ENCODE measurements at regions of chr7 and their contacts with region 1.

Region 1: GRCh38 chr7:2232766-2233520 is at the start of gene MAD1L1:
- DNase-seq: peak; percentile 93
- H3K4me3 Mint-ChIP-seq: peak within 1 kb of the TSS; percentile 88
- H3K27ac Mint-ChIP-seq: peak within 1 kb of the TSS; percentile 46
- H3K4me1 Mint-ChIP-seq: peaks cover 32% of the 10 kb centered on the region
- H3K27me3 Mint-ChIP-seq: no peaks in the 10 kb centered on the region
- total RNA-seq, gene MAD1L1: 37.5 to 40.2 TPM

Region 2: DNA sequence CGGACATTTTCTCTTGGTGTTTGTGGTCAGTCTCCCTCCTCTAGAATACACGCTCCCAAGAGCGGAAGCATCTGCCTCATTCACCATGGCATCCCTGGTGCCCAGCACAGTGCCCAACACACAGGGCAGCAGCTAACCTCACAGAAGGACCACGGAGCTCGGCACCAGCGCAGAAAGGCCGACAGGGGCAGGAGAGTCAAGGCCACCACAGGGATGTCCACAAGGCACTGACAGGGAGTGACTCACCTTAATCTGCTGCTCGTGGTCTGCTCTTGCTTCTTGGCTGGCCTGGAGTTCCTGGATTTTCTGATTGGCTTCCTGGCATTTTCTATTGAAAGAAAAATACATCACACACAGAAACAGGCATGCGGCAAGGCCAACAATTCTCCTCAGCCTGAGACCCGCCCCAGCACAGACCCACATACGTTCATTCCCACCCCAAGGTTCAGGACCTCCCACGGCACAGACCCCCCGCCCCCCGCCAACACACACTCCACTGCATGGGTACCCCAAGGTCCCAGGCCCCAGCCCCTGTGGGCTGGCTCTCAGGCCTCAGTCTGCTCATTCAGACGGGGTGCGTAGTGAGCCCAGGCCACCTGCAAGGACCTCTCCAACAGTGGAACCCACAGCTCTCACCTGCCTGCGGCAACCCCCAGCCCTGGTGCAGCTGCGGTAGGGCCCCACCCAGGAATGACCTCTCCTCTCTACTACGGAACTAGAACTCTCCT is 15.1 kb before region 1 on chr7:
- CTCF ChIA-PET with region 1: no interaction called
- intact Hi-C with region 1: no loop called
- DNase-seq: no peak
- H3K4me3 Mint-ChIP-seq: no peak overlapping the region
- H3K27ac Mint-ChIP-seq: no peak overlapping the region
- H3K4me1 Mint-ChIP-seq: no peaks in the 10 kb centered on the region
- H3K27me3 Mint-ChIP-seq: no peaks in the 10 kb centered on the region

Region 3: DNA sequence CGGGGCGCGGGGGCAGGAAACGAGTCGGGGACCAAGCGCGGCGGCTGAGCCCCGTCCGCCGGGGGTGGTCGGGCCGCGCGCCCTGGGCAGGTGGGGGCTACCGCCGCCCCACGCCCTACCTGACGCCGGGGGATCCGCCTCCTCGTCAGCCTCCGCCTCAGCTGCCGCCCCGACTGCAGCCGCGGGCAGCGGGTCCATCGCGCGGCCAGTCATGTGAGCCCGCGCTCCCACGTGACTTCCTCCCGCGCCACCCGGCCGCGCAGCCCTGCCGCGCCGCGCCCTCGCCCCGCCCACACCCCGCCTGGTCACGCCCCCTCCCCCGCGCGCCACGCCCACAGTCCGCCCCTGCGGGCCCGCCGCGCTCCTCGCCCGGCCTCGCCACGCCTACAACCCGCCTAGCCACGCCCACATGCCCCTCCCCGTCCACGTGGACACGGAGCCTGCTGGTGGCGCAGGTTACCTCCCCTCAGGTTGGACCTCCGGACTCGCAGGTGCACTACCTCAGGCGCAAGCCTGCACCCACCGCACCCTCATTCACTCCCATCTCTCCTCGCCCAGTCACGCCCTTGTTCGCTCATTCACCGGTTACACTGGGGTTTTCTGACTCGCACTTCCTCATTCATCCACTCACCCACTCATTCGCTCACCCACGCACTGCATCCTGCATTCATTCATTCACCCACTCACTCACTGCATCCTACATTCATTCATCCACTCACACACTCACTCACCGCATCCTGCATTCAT is 81.4 kb after region 1 on chr7 and contains the start of gene SNX8:
- CTCF ChIA-PET with region 1: no interaction called
- intact Hi-C with region 1: loop called (anchors 2 kb)
- DNase-seq: peak; percentile 95
- H3K4me3 Mint-ChIP-seq: peak within 1 kb of the TSS; percentile 88
- H3K27ac Mint-ChIP-seq: no peak within 1 kb of the TSS
- H3K4me1 Mint-ChIP-seq: peaks cover 13% of the 10 kb centered on the region
- H3K27me3 Mint-ChIP-seq: no peaks in the 10 kb centered on the region
- total RNA-seq, gene SNX8: 28.7 to 29.6 TPM